Naive thymus-derived CD4-positive, alpha-beta T cell (primary cell): ENCODE measurements at regions of chr9 and their contacts with region 1.

Region 1: GRCh38 chr9:130042833-130043653 is at the start of gene FNBP1:
- DNase-seq: peak; percentile 75 to 89 (median 84)
- ATAC-seq: peak; percentile 87
- H3K4me3 ChIP-seq: peak within 1 kb of the TSS; percentile 89
- H3K4me3 Mint-ChIP-seq: peak within 1 kb of the TSS; percentile 94 to 100 (median 99)
- H3K27ac ChIP-seq: peak within 1 kb of the TSS; percentile 96
- H3K27ac Mint-ChIP-seq: peak within 1 kb of the TSS; percentile 96 to 99 (median 98)
- H3K4me1 ChIP-seq: peaks cover 31 to 36% of the 10 kb centered on the region in 2 donors
- H3K4me1 Mint-ChIP-seq: peaks cover 32 to 68% (median 53%) of the 10 kb centered on the region in 7 donors
- H3K27me3 ChIP-seq: no peaks in the 10 kb centered on the region
- H3K27me3 Mint-ChIP-seq: peaks cover 0 to 5% (median 0%) of the 10 kb centered on the region in 5 donors
- total RNA-seq, gene FNBP1: 160 to 207 (median 174) TPM

Region 2: GRCh38 chr9:129110740-129111527 is 932.1 kb before region 1 on chr9 and contains the starts of genes CRAT and PTPA:
- CTCF ChIA-PET with region 1: no interaction called
- POLR2A ChIA-PET with region 1: no interaction called
- intact Hi-C with region 1: loop called in 1 of 2 experiments (anchors 10 kb)
- DNase-seq: peak; percentile 85 to 96 (median 89)
- ATAC-seq: peak; percentile 93
- H3K4me3 ChIP-seq: peak within 1 kb of the TSS; percentile 82
- H3K4me3 Mint-ChIP-seq: peak within 1 kb of the TSS; percentile 88 to 97 (median 92)
- H3K27ac ChIP-seq: peak within 1 kb of the TSS; percentile 87
- H3K27ac Mint-ChIP-seq: peak within 1 kb of the TSS; percentile 83 to 97 (median 94)
- H3K4me1 ChIP-seq: peaks cover 10% of the 10 kb centered on the region in 2 donors
- H3K4me1 Mint-ChIP-seq: peaks cover 26 to 45% (median 29%) of the 10 kb centered on the region in 7 donors
- H3K27me3 ChIP-seq: no peaks in the 10 kb centered on the region
- H3K27me3 Mint-ChIP-seq: no peaks in the 10 kb centered on the region
- total RNA-seq, gene CRAT: 7.2 to 15.6 (median 11.4) TPM
- total RNA-seq, gene PTPA: 45.0 to 110 (median 52.3) TPM

Region 3: DNA sequence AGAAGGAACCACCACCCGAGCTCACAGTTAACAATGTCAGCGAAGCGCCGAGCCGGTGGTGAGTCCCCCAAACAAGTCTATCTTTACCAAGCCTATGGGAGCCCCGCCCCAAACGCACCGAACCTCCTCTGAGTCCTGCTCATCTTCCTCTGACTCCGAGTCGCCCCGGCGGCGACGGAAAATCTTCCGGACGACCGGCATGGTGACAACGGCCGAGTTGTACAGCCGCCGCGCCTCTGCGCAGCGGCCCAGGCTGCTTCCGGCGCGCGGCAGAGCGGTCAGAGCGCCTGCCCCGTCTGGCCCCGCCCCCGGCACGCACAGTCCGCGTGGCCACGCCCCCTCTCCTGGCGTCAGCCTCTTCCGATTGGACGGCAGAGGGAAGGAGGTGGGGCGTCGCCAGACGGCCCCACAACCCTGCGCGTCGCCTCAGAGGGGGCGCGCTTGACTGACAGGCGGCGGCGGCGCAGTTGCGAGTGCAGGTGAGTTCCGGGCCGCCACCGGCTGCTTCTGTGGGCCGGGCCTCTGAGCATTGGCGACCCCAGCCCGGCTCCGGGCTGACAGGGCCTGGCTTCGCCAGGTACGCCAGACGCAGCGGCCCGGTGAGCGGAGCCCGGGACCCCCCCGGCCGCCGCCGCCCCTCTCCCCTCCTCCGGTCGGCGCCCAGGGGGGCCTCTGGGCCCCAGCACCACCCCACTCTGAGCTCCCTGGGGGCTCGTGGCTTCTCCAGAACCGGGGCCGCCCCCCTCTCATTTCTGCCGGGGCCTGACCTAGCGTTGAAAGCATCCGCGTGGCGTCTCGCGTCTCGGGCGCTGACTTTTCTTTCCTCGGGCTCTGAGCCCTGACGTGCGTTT is 207.8 kb before region 1 on chr9 and contains the starts of genes C9orf78 and USP20:
- CTCF ChIA-PET with region 1: interaction called, 4 read pairs
- POLR2A ChIA-PET with region 1: interaction called, 3 read pairs
- intact Hi-C with region 1: loop called (anchors 2 kb)
- DNase-seq: peak; percentile 95 to 99 (median 98)
- ATAC-seq: peak; percentile 98
- H3K4me3 ChIP-seq: peak within 1 kb of the TSS; percentile 96
- H3K4me3 Mint-ChIP-seq: peak within 1 kb of the TSS; percentile 86 to 99 (median 98)
- H3K27ac ChIP-seq: peak within 1 kb of the TSS; percentile 97
- H3K27ac Mint-ChIP-seq: peak within 1 kb of the TSS; percentile 91 to 99 (median 98)
- H3K4me1 ChIP-seq: peaks cover 36 to 50% of the 10 kb centered on the region in 2 donors
- H3K4me1 Mint-ChIP-seq: peaks cover 41 to 65% (median 57%) of the 10 kb centered on the region in 7 donors
- H3K27me3 ChIP-seq: no peaks in the 10 kb centered on the region
- H3K27me3 Mint-ChIP-seq: no peaks in the 10 kb centered on the region
- total RNA-seq, gene C9orf78: 66.2 to 118 (median 95.8) TPM
- total RNA-seq, gene USP20: 94.9 to 156 (median 118) TPM

Region 4: DNA sequence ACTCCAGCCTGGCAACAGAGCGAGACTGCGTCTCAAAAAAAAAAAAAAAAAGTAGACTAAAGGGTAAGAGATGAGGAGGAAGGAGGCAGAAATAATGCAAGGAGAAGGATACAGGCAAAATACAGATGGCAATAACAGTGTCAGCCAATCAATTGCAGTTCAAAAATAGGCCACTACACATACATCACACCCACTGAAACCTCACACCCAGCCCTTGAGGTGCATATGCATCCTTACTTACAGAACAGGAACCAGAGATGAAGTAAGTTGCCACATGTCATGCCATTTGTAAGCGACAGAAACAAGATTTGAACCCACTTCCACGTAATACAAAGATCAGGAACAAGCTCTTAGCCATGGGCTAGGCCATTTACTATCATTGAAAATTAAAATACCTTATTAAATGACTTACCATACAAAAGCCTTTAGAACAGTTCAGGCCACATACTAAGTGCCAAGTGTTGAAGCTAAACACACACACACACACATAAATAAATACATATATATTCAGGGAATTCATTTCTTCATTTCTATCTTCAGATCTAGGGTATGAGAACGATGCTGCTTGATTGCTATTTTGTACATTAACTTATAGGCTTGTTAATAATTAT is 98.4 kb before region 1 on chr9:
- CTCF ChIA-PET with region 1: no interaction called
- POLR2A ChIA-PET with region 1: interaction called, 11 read pairs
- intact Hi-C with region 1: loop called in 1 of 2 experiments (anchors 2 kb)
- DNase-seq: peak in 8 of 9 donors; percentile 38 to 78 (median 70)
- ATAC-seq: peak; percentile 96
- H3K4me3 ChIP-seq: peak overlapping the region; percentile 20
- H3K4me3 Mint-ChIP-seq: peak overlapping the region; percentile 8 to 76 (median 64)
- H3K27ac ChIP-seq: peak overlapping the region; percentile 49
- H3K27ac Mint-ChIP-seq: peak overlapping the region; percentile 68 to 94 (median 85)
- H3K4me1 ChIP-seq: peaks cover 36 to 47% of the 10 kb centered on the region in 2 donors
- H3K4me1 Mint-ChIP-seq: peaks cover 35 to 75% (median 60%) of the 10 kb centered on the region in 7 donors
- H3K27me3 ChIP-seq: no peaks in the 10 kb centered on the region
- H3K27me3 Mint-ChIP-seq: no peaks in the 10 kb centered on the region

Region 5: DNA sequence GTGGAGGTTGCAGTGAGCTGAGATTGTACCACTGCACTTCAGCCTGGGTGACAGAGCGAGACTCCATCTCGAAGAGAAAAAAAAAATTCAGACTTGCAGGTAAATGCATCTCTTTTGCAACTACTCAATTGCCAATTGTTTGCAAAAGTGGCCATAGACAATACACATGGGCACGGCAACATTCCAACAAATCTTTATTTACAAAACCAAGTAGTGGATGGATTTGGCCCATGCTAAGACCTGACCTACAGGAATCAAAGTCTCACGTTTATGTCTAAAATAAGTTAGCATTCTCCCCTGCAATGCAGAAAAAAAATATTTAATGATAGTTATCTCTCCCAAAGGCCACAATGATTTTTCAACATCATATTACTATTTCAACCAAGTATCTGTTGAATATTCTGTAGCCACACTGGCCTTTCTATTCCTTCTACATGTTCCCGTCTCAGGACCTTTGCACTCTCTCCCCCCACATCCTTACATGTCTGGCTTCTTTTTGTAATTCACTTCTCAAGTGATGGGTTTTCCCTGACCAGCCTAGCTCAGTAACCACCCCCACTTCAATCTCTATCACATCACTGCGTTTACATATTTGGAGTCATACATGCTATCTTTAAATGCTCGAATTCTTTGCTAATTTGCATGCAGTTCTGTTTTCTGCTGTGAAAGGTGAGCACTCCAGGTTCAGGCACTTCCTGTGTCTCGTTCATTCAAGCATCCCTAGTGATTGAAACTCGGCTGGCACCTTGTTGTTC is 54.3 kb before region 1 on chr9:
- CTCF ChIA-PET with region 1: interaction called, 4 read pairs
- POLR2A ChIA-PET with region 1: interaction called, 3 read pairs
- intact Hi-C with region 1: loop called (anchors 1 to 2 kb)
- DNase-seq: peak in 4 of 9 donors; percentile 25 to 58 (median 29)
- ATAC-seq: peak; percentile 67
- H3K4me3 ChIP-seq: no peak overlapping the region
- H3K4me3 Mint-ChIP-seq: peak overlapping the region; percentile 18 to 85 (median 48)
- H3K27ac ChIP-seq: peak overlapping the region; percentile 76
- H3K27ac Mint-ChIP-seq: peak overlapping the region; percentile 54 to 98 (median 92)
- H3K4me1 ChIP-seq: peaks cover 43 to 48% of the 10 kb centered on the region in 2 donors
- H3K4me1 Mint-ChIP-seq: peaks cover 44 to 83% (median 73%) of the 10 kb centered on the region in 7 donors
- H3K27me3 ChIP-seq: no peaks in the 10 kb centered on the region
- H3K27me3 Mint-ChIP-seq: no peaks in the 10 kb centered on the region

Region 6: DNA sequence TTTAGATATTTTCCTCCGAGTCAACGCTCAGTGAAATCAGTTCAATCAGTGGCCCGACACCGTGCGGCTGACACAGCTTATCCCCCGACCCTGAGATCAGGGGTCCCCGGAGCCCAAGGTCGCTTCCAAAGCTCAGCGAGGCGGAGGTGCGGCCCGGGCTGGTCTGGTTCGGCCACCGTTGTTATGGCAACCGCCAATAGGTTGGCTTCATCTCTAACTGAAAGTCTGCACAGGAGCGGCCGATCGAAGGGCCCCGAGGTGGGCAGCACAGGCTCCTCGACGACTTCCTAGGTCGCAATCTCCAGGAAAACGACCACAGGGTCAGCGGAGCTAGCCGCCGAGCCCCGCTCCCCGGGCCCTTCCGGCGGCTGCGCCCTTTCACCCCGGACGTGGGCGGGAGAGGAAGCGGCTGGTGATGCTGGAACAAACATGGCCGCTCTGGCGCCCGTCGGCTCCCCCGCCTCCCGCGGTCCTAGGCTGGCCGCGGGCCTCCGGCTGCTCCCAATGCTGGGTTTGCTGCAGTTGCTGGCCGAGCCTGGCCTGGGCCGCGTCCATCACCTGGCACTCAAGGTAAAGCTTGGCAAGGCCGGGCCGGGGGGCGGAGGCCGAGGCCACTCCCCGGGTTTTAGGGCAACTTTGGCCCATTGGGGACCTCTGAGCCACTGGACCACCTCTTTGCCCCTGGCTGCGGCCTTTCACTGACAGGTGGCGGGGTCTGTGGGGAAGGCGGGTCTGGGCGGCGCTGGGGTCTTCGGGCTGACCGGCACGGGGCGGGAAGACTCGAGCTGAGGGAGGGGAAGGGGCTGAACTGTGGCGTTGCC is 10.7 kb after region 1 on chr9 and contains the start of gene GPR107:
- CTCF ChIA-PET with region 1: interaction called, 4 read pairs
- POLR2A ChIA-PET with region 1: interaction called, 25 read pairs
- intact Hi-C with region 1: loop called (anchors 1 kb)
- DNase-seq: peak; percentile 68 to 88 (median 73)
- ATAC-seq: peak; percentile 98
- H3K4me3 ChIP-seq: peak within 1 kb of the TSS; percentile 92
- H3K4me3 Mint-ChIP-seq: peak within 1 kb of the TSS; percentile 90 to 96 (median 94)
- H3K27ac ChIP-seq: peak within 1 kb of the TSS; percentile 96
- H3K27ac Mint-ChIP-seq: peak within 1 kb of the TSS; percentile 92 to 95 (median 94)
- H3K4me1 ChIP-seq: peaks cover 13% of the 10 kb centered on the region in 2 donors
- H3K4me1 Mint-ChIP-seq: peaks cover 6 to 44% (median 31%) of the 10 kb centered on the region in 7 donors
- H3K27me3 ChIP-seq: no peaks in the 10 kb centered on the region
- H3K27me3 Mint-ChIP-seq: no peaks in the 10 kb centered on the region
- total RNA-seq, gene GPR107: 21.6 to 24.0 (median 22.8) TPM

Region 7: DNA sequence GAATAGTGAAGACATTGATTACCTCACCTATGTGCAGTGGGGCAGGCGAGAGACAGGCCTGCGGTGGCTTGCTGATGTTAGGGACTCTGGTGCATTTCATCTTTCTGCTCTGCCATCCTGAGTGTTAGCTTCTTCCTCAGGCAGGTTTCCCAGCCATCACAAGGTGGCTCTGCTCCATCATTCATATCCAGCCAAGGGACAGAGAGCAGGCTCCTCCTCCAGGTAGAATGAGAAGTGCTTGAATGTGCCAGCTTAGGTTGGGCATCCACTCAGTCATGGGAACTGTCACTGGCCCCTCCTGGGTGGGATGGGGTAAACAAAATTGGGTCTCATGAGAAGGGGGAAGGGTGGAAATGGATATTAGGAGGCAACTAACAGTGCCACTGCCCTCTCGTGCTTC is 35.5 kb after region 1 on chr9:
- CTCF ChIA-PET with region 1: no interaction called
- POLR2A ChIA-PET with region 1: no interaction called
- intact Hi-C with region 1: no loop called
- DNase-seq: no peak
- ATAC-seq: no peak
- H3K4me3 ChIP-seq: no peak overlapping the region
- H3K4me3 Mint-ChIP-seq: no peak overlapping the region
- H3K27ac ChIP-seq: no peak overlapping the region
- H3K27ac Mint-ChIP-seq: peak overlapping the region in 1 of 9 donors; percentile 42
- H3K4me1 ChIP-seq: no peaks in the 10 kb centered on the region
- H3K4me1 Mint-ChIP-seq: peaks cover 0 to 15% (median 12%) of the 10 kb centered on the region in 7 donors
- H3K27me3 ChIP-seq: no peaks in the 10 kb centered on the region
- H3K27me3 Mint-ChIP-seq: no peaks in the 10 kb centered on the region

Region 8: GRCh38 chr9:130860458-130861316 is 817.6 kb after region 1 on chr9:
- CTCF ChIA-PET with region 1: no interaction called
- POLR2A ChIA-PET with region 1: no interaction called
- intact Hi-C with region 1: no loop called
- DNase-seq: no peak
- ATAC-seq: peak; percentile 72
- H3K4me3 ChIP-seq: no peak overlapping the region
- H3K4me3 Mint-ChIP-seq: no peak overlapping the region
- H3K27ac ChIP-seq: no peak overlapping the region
- H3K27ac Mint-ChIP-seq: peak overlapping the region in 2 of 9 donors; percentile 33 to 57
- H3K4me1 ChIP-seq: no peaks in the 10 kb centered on the region
- H3K4me1 Mint-ChIP-seq: peaks cover 0 to 8% (median 2%) of the 10 kb centered on the region in 7 donors
- H3K27me3 ChIP-seq: no peaks in the 10 kb centered on the region
- H3K27me3 Mint-ChIP-seq: no peaks in the 10 kb centered on the region